Activated CD4-positive, alpha-beta memory T cell treated with anti-CD3 and anti-CD28 coated beads for 36 hours (primary cell): ENCODE measurements at regions of chr7 and their contacts with region 1.

Region 1: DNA sequence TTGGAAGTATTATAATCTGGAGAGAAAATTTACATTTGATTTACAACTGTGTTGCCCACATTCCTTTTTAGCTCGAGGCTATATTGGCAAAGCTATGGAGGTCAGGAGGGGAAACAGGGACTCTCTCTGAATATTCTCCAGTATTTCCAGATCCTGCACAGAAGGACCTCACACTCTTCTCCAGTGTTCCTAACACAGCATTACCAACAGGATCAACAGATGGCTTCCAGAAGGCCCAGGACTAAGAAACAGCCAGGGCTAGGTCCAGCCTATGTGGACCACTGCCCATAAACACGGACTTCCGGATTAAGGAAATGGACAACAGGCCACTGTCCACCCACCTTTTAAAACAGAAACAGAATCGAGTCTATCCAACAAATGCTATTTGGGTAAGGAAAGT is 65.3 kb downstream of the CHCHD3 start:
- DNase-seq: no peak
- H3K4me3 Mint-ChIP-seq: no peak overlapping the region
- H3K27ac Mint-ChIP-seq: no peak overlapping the region
- H3K4me1 Mint-ChIP-seq: no peaks in the 10 kb centered on the region
- H3K27me3 Mint-ChIP-seq: no peaks in the 10 kb centered on the region

Region 2: DNA sequence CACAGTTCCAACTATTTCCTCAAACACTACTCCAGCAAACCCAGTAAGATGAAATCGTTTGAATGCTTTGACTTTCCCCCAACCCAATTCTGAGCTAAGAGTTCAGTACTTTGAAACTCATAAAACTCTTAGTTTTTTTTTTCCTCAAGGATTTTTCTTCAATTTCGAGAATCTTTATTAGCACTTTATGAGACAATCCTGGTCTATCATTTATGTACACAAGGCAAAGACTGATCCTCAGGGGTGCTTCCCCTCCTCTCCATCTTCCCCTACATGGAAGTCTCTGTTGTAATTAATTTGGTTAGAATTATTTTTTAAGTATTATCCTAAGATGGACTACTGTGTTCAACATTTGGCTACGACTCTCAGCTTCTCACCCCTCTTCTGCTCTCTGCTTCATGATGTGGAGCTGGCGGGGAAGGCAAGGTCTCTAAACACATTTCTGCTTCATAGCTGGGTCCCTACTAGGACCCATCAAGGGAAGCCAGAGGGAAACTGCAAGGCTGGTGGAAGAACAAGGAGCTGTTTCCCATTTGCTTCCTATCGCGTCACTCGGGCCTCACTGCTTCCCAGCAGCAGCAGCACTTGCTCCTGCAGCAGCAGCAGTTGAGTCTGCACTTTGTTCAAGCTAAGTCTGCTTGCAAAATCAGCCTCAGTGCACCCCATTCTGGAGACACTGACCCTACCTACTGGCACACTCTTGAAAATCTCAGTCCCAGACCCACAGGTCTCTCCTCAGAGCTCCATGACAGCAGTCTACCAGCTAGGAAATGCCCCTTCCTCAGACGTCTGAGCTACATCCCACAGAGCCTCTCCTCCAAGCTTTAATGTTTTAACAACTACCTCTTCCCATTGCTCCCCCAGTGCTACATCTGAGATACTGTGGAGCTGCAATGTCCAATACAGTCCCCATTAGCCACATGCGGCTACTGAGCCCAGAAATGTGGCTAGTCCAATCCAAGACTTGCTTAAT is 24.7 kb before region 1 on chr7:
- CTCF ChIA-PET with region 1: interaction called, 4 read pairs
- POLR2A ChIA-PET with region 1: no interaction called
- intact Hi-C with region 1: loop called (anchors 1 kb)
- DNase-seq: no peak
- H3K4me3 Mint-ChIP-seq: no peak overlapping the region
- H3K27ac Mint-ChIP-seq: no peak overlapping the region
- H3K4me1 Mint-ChIP-seq: peaks cover 15% of the 10 kb centered on the region
- H3K27me3 Mint-ChIP-seq: no peaks in the 10 kb centered on the region

Region 3: DNA sequence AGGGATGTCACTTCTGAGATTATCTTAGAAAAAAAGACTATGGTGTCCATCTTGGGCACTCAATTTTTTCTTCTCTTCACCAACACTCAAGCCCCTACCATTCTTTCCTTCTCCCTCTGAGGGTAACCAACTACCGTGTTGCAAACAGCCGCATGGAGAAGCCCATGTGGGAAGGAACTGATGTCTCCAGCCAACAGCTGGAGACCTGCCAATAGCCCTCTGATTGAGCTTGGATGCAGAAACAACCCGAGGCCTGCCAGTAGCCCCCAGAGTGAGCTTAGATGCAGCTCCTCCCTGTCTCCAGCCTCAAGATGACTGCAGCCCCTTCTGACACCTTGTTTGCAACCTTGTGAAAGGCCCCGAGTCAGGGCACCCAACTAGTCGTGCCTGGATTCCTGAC is 101.7 kb after region 1 on chr7:
- CTCF ChIA-PET with region 1: no interaction called
- POLR2A ChIA-PET with region 1: no interaction called
- intact Hi-C with region 1: no loop called
- DNase-seq: no peak
- H3K4me3 Mint-ChIP-seq: no peak overlapping the region
- H3K27ac Mint-ChIP-seq: no peak overlapping the region
- H3K4me1 Mint-ChIP-seq: no peaks in the 10 kb centered on the region
- H3K27me3 Mint-ChIP-seq: peaks cover 1% of the 10 kb centered on the region